ENCODE measurements at regions of chr3 and their contacts with region 1.

Region 1: DNA sequence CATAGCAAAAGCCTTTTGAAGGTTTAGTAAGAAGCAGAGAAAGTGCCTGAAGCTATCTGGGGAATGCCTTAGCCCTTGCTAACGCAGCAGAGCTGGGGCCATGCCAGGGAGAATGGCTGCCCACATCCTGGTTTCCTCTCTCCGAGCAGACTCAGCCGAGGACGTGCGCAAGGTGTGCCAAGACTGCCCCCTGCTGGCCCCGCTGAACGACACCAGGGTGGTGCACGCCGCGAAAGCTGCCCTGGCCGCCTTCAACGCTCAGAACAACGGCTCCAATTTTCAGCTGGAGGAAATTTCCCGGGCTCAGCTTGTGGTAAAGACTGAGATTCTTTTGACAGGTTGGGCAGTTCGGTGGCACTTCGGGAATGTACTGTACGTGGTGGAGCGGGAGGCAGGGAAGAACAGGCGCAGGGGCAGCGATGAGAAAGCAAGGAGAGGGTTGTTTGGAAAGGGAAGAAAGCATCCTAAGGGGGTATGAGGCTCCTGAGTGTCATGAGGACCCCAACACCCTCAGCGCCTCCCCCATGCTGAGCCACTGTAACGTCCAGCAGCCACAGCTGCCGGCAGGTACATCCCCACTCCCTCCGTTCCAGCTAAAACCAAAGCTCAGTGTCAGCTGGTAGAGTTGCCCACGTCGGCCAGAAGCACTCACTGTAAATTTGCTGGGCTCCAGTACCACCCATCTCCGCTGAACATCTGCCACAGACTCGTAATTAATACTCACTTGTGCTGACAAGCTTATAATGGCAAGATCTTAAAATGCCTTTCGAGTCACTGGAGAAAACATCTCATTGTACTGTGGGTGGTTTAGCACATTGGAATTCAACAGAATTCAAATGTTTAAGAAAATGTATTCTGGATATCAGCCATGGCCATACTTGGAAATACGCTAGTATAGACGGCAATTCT is 4.4 kb downstream of the AHSG start:
- DNase-seq: peak; percentile 59
- ATAC-seq: peak; percentile 98
- H3K4me3 ChIP-seq: no peak overlapping the region; the same call in 1 of the 2 replicates
- H3K27ac ChIP-seq: no peak overlapping the region
- H3K4me1 ChIP-seq: peaks cover 7% of the 10 kb centered on the region
- H3K27me3 ChIP-seq: peaks cover 2 to 3% of the 10 kb centered on the region in 2 experiments; a peak in 3 of 4 replicates
- CTCF ChIP-seq: peak; percentile 94 to 97 (median 96)
- EP300 ChIP-seq: no peak
- POLR2A ChIP-seq: no peak
- RAD21 ChIP-seq: peak; percentile 77

Region 2: GRCh38 chr3:186259612-186260383 is 357.5 kb before region 1 on chr3:
- CTCF ChIA-PET with region 1: interaction called, 62 read pairs
- POLR2A ChIA-PET with region 1: interaction called, 3 read pairs
- RAD21 ChIA-PET with region 1: interaction called, 17 read pairs
- SMC1A ChIA-PET with region 1: interaction called, 7 read pairs
- in situ Hi-C with region 1: no loop called
- intact Hi-C with region 1: loop called (anchors 5 kb)
- DNase-seq: no peak
- ATAC-seq: peak; percentile 89
- H3K4me3 ChIP-seq: no peak overlapping the region
- H3K27ac ChIP-seq: no peak overlapping the region
- H3K4me1 ChIP-seq: peaks cover 14% of the 10 kb centered on the region
- H3K27me3 ChIP-seq: no peaks in the 10 kb centered on the region
- CTCF ChIP-seq: peak; percentile 96 to 99 (median 97)
- EP300 ChIP-seq: no peak
- POLR2A ChIP-seq: no peak
- RAD21 ChIP-seq: peak; percentile 94

Region 3: GRCh38 chr3:186493525-186494255 is 123.6 kb before region 1 on chr3:
- CTCF ChIA-PET with region 1: no interaction called
- POLR2A ChIA-PET with region 1: no interaction called
- RAD21 ChIA-PET with region 1: no interaction called
- SMC1A ChIA-PET with region 1: no interaction called
- in situ Hi-C with region 1: no loop called
- intact Hi-C with region 1: no loop called
- DNase-seq: no peak
- ATAC-seq: no peak
- H3K4me3 ChIP-seq: no peak overlapping the region
- H3K27ac ChIP-seq: no peak overlapping the region
- H3K4me1 ChIP-seq: no peaks in the 10 kb centered on the region
- H3K27me3 ChIP-seq: no peaks in the 10 kb centered on the region
- CTCF ChIP-seq: no peak
- EP300 ChIP-seq: no peak
- POLR2A ChIP-seq: no peak
- RAD21 ChIP-seq: no peak

Region 4: GRCh38 chr3:186577521-186577920 is 39.8 kb before region 1 on chr3:
- CTCF ChIA-PET with region 1: interaction called, 19 read pairs
- POLR2A ChIA-PET with region 1: no interaction called
- RAD21 ChIA-PET with region 1: no interaction called
- SMC1A ChIA-PET with region 1: interaction called, 5 read pairs
- in situ Hi-C with region 1: no loop called
- intact Hi-C with region 1: no loop called
- DNase-seq: no peak
- ATAC-seq: no peak
- H3K4me3 ChIP-seq: no peak overlapping the region
- H3K27ac ChIP-seq: no peak overlapping the region
- H3K4me1 ChIP-seq: no peaks in the 10 kb centered on the region
- H3K27me3 ChIP-seq: no peaks in the 10 kb centered on the region
- CTCF ChIP-seq: no peak
- EP300 ChIP-seq: no peak
- POLR2A ChIP-seq: no peak
- RAD21 ChIP-seq: no peak

Region 5: GRCh38 chr3:186630950-186631641 is 13.8 kb after region 1 on chr3:
- CTCF ChIA-PET with region 1: interaction called, 35 read pairs
- POLR2A ChIA-PET with region 1: no interaction called
- RAD21 ChIA-PET with region 1: interaction called, 4 read pairs
- SMC1A ChIA-PET with region 1: interaction called, 3 read pairs
- in situ Hi-C with region 1: no loop called
- intact Hi-C with region 1: no loop called
- DNase-seq: no peak
- ATAC-seq: no peak
- H3K4me3 ChIP-seq: no peak overlapping the region
- H3K27ac ChIP-seq: no peak overlapping the region
- H3K4me1 ChIP-seq: no peaks in the 10 kb centered on the region
- H3K27me3 ChIP-seq: no peaks in the 10 kb centered on the region; a peak in 2 of 4 replicates
- CTCF ChIP-seq: no peak
- EP300 ChIP-seq: no peak
- POLR2A ChIP-seq: no peak
- RAD21 ChIP-seq: no peak

Region 6: GRCh38 chr3:186669378-186670084 is 52.2 kb after region 1 on chr3:
- CTCF ChIA-PET with region 1: no interaction called
- POLR2A ChIA-PET with region 1: no interaction called
- RAD21 ChIA-PET with region 1: no interaction called
- SMC1A ChIA-PET with region 1: no interaction called
- in situ Hi-C with region 1: no loop called
- intact Hi-C with region 1: no loop called
- DNase-seq: no peak
- ATAC-seq: no peak
- H3K4me3 ChIP-seq: no peak overlapping the region
- H3K27ac ChIP-seq: no peak overlapping the region
- H3K4me1 ChIP-seq: no peaks in the 10 kb centered on the region
- H3K27me3 ChIP-seq: no peaks in the 10 kb centered on the region; a peak in 1 of 4 replicates
- CTCF ChIP-seq: no peak
- EP300 ChIP-seq: no peak
- POLR2A ChIP-seq: no peak
- RAD21 ChIP-seq: no peak

Region 7: DNA sequence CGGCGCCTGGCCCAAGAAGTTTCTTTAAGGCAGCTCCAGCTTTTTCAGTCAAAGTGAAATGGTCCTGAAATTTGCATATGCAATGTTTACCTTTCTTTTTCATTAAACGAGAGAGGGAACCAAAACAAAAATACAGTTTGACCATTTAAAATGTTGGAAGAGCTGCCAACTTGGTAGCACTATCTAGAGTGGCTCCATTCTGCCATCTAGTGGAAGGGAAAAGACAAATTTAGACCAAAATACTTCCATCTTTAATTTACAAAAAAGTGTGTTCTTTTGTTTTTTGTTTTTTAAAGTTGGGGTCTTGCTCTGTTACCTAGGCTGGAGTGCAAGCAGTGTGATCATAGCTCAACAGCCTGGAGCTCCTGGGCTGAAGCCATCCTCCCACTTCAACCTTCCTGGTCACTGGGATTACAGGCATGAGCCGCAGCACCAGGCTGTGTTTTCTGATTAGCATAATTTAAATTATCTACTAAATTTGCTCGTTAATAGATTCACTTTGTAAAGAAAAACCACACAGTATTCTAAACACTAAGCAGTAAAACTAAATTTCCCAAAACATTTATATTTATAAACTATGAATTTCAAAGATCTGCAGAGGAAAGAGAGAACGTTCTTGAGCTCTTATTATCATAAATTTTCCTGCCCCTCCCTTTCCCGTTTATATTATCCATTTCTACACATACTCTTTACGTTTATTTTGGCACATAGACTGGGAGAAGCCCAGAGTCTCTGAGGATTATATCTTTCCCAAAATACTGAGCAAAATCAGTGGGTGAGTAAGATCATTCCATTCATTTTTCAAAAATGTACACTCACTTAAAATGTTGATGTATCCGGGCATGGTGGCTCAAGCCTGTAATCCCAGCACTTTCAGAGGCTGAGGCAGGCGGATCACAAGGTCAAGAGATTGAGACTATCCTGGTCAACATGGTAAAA is 204.4 kb after region 1 on chr3:
- CTCF ChIA-PET with region 1: interaction called, 183 read pairs
- POLR2A ChIA-PET with region 1: interaction called, 3 read pairs
- RAD21 ChIA-PET with region 1: interaction called, 45 read pairs
- SMC1A ChIA-PET with region 1: interaction called, 25 read pairs
- in situ Hi-C with region 1: loop called (anchors 5 kb)
- intact Hi-C with region 1: loop called (anchors 1 kb)
- DNase-seq: no peak
- ATAC-seq: peak; percentile 52
- H3K4me3 ChIP-seq: no peak overlapping the region
- H3K27ac ChIP-seq: no peak overlapping the region
- H3K4me1 ChIP-seq: no peaks in the 10 kb centered on the region
- H3K27me3 ChIP-seq: peaks cover 5 to 18% of the 10 kb centered on the region in 2 experiments
- CTCF ChIP-seq: peak; percentile 50 to 69 (median 59)
- EP300 ChIP-seq: no peak
- POLR2A ChIP-seq: no peak
- RAD21 ChIP-seq: peak; percentile 75

Region 8: GRCh38 chr3:187211532-187212195 is 594.4 kb after region 1 on chr3:
- CTCF ChIA-PET with region 1: no interaction called
- POLR2A ChIA-PET with region 1: no interaction called
- RAD21 ChIA-PET with region 1: no interaction called
- SMC1A ChIA-PET with region 1: no interaction called
- in situ Hi-C with region 1: no loop called
- intact Hi-C with region 1: no loop called
- DNase-seq: no peak
- ATAC-seq: no peak
- H3K4me3 ChIP-seq: no peak overlapping the region
- H3K27ac ChIP-seq: no peak overlapping the region
- H3K4me1 ChIP-seq: no peaks in the 10 kb centered on the region
- H3K27me3 ChIP-seq: 0 out of 4 replicates have a peak, but pooled peaks cover 0 to 3% of the 10 kb centered on the region in 2 experiments
- CTCF ChIP-seq: no peak
- EP300 ChIP-seq: no peak
- POLR2A ChIP-seq: no peak
- RAD21 ChIP-seq: no peak

Measured in GM12878 (cell line).